Mammary epithelial cell (primary cell): ENCODE measurements at regions of chrX and their contacts with region 1.

Region 1: GRCh38 chrX:22081475-22082092 is 49.5 kb downstream of the PHEX start:
- DNase-seq: peak; percentile 43
- H3K4me3 ChIP-seq: no peak overlapping the region
- H3K27ac ChIP-seq: no peak overlapping the region
- H3K4me1 ChIP-seq: no peaks in the 10 kb centered on the region
- H3K27me3 ChIP-seq: no peaks in the 10 kb centered on the region
- CTCF ChIP-seq: peak; percentile 87 to 94

Region 2: GRCh38 chrX:22122510-22122909 is 40.9 kb after region 1 on chrX:
- CTCF ChIA-PET with region 1: no interaction called
- dilution Hi-C with region 1: no loop called
- in situ Hi-C with region 1: no loop called
- intact Hi-C with region 1: loop called (anchors 5 kb)
- DNase-seq: peak; percentile 97
- H3K4me3 ChIP-seq: no peak overlapping the region
- H3K27ac ChIP-seq: peak overlapping the region; percentile 91
- H3K4me1 ChIP-seq: peaks cover 54% of the 10 kb centered on the region
- H3K27me3 ChIP-seq: no peaks in the 10 kb centered on the region
- CTCF ChIP-seq: no peak

Region 3: GRCh38 chrX:22159071-22159799 is 77.7 kb after region 1 on chrX:
- CTCF ChIA-PET with region 1: no interaction called
- dilution Hi-C with region 1: no loop called
- in situ Hi-C with region 1: no loop called
- intact Hi-C with region 1: no loop called
- DNase-seq: peak; percentile 31
- H3K4me3 ChIP-seq: no peak overlapping the region
- H3K27ac ChIP-seq: no peak overlapping the region
- H3K4me1 ChIP-seq: peaks cover 6% of the 10 kb centered on the region
- H3K27me3 ChIP-seq: no peaks in the 10 kb centered on the region
- CTCF ChIP-seq: no peak

Region 4: GRCh38 chrX:22192417-22193060 is 111.0 kb after region 1 on chrX:
- CTCF ChIA-PET with region 1: no interaction called
- dilution Hi-C with region 1: no loop called
- in situ Hi-C with region 1: no loop called
- intact Hi-C with region 1: loop called (anchors 1 kb)
- DNase-seq: peak; percentile 41
- H3K4me3 ChIP-seq: no peak overlapping the region
- H3K27ac ChIP-seq: no peak overlapping the region
- H3K4me1 ChIP-seq: peaks cover 2% of the 10 kb centered on the region
- H3K27me3 ChIP-seq: no peaks in the 10 kb centered on the region
- CTCF ChIP-seq: peak; percentile 70 to 82

Region 5: DNA sequence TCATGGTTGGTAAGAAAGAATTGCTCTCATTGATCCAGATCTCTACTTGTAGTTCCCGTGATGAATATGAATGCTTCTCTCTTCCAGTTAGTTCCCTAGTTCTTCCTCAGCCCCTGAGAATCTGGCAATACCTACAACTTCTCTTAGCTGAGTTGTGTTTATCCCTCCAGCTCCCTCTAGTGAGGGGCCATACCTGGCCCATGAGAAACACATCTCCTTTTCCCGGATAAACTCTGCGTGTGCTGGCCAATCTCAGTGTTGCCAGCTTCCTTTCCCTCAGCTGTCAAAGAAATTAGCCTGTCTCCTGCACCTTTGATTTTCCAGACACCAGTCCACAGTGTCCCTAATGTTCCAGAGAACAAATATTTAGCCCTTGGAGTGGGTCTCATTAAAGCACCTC is 196.8 kb after region 1 on chrX:
- CTCF ChIA-PET with region 1: no interaction called
- dilution Hi-C with region 1: no loop called
- in situ Hi-C with region 1: no loop called
- intact Hi-C with region 1: loop called (anchors 1 kb)
- DNase-seq: peak; percentile 19
- H3K4me3 ChIP-seq: no peak overlapping the region
- H3K27ac ChIP-seq: no peak overlapping the region
- H3K4me1 ChIP-seq: no peaks in the 10 kb centered on the region
- H3K27me3 ChIP-seq: no peaks in the 10 kb centered on the region
- CTCF ChIP-seq: peak; percentile 47 to 58

Region 6: DNA sequence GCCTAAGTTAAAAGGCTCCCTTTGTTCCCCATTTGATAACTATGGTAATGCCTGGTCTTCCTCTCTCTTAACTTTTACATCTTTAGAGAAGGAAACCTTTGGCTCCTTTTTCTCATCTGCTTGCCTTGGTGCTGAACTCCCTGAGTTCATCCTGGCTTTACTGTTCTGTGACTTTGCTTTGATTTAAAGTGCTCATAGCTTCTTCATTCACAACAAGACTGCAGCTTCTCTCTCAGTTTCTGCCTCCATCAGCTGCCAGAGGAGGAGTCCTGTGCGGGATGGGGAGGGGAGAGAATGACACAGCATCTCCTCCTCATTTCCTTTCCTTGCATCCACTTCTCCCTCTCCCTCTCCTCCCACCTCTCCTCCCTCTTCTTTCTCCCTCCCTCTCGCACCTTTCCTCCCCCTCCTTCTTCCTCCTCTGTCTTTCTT is 233.1 kb after region 1 on chrX:
- CTCF ChIA-PET with region 1: no interaction called
- dilution Hi-C with region 1: no loop called
- in situ Hi-C with region 1: no loop called
- intact Hi-C with region 1: no loop called
- DNase-seq: peak; percentile 4
- H3K4me3 ChIP-seq: no peak overlapping the region
- H3K27ac ChIP-seq: no peak overlapping the region
- H3K4me1 ChIP-seq: peaks cover 5% of the 10 kb centered on the region
- H3K27me3 ChIP-seq: no peaks in the 10 kb centered on the region
- CTCF ChIP-seq: no peak

Region 7: DNA sequence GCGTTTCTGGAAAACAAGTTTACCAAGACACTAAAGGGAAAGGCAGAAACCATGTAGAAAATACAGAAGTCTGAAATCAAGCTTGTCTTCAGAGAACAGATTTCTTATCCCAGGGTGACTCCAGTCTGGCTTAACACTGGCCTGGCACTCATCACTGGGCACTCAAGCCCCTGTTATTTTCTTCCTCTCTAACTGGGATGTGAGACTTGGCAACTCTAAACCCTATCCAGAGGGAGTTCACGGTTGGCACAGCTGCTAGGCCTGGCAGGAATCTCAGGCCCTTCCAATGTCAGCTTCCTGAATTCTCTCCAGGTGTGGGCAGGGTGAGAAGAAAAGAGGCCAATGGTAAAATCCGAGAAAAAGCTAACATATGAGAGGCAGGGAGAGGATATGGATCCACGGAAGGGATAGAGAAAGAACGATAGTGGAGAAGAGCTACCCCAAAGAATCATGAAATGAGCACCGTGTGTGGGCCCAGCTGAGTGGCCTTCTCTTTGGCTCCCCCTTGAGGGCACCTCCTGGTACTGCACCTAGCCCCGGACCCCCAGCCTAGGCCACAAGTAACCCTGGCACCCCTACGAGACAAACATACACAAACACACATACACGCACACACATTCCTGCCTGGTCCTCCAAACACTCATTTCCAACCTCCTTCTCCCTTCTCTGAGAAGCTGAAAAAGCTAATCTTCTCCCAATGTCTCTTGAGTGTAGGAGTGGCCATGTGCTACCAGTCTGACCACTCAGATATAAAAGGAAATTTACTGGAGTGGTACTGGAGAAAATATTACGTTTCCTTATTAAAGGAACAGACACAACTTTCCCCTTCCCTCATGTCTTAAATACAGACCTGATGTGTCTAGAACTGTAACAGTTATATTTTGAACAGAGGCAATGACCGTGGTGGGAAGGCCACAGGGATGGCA is 1236.5 kb after region 1 on chrX:
- CTCF ChIA-PET with region 1: no interaction called
- dilution Hi-C with region 1: no loop called
- in situ Hi-C with region 1: no loop called
- intact Hi-C with region 1: loop called (anchors 1 kb)
- DNase-seq: no peak
- H3K4me3 ChIP-seq: no peak overlapping the region
- H3K27ac ChIP-seq: no peak overlapping the region
- H3K4me1 ChIP-seq: no peaks in the 10 kb centered on the region
- H3K27me3 ChIP-seq: peaks cover 4% of the 10 kb centered on the region
- CTCF ChIP-seq: peak; percentile 92 to 94